BJ (cell line): ENCODE measurements at regions of chr13 and their contacts with region 1.

Region 1: GRCh38 chr13:51643882-51644281 is 59.6 kb downstream of the WDFY2 start:
- DNase-seq: peak; percentile 64
- H3K4me3 ChIP-seq: no peak overlapping the region
- H3K27me3 ChIP-seq: no peaks in the 10 kb centered on the region
- CTCF ChIP-seq: no peak

Region 2: GRCh38 chr13:51632591-51633362 is 11.1 kb before region 1 on chr13:
- CTCF ChIA-PET with region 1: no interaction called
- POLR2A ChIA-PET with region 1: interaction called, 25 read pairs
- DNase-seq: no peak
- H3K4me3 ChIP-seq: no peak overlapping the region
- H3K27me3 ChIP-seq: no peaks in the 10 kb centered on the region
- CTCF ChIP-seq: no peak